ENCODE measurements at regions of chrX and their contacts with region 1.

Region 1: GRCh38 chrX:15674841-15675489 is 10.4 kb upstream of the CLTRN start:
- DNase-seq: peak; percentile 91
- H3K4me3 ChIP-seq: peak overlapping the region; percentile 49 to 54
- H3K27ac ChIP-seq: peak overlapping the region; percentile 94 to 97
- H3K4me1 ChIP-seq: no peaks in the 10 kb centered on the region
- H3K27me3 ChIP-seq: no peaks in the 10 kb centered on the region
- CTCF ChIP-seq: no peak
- POLR2A ChIP-seq: no peak

Region 2: DNA sequence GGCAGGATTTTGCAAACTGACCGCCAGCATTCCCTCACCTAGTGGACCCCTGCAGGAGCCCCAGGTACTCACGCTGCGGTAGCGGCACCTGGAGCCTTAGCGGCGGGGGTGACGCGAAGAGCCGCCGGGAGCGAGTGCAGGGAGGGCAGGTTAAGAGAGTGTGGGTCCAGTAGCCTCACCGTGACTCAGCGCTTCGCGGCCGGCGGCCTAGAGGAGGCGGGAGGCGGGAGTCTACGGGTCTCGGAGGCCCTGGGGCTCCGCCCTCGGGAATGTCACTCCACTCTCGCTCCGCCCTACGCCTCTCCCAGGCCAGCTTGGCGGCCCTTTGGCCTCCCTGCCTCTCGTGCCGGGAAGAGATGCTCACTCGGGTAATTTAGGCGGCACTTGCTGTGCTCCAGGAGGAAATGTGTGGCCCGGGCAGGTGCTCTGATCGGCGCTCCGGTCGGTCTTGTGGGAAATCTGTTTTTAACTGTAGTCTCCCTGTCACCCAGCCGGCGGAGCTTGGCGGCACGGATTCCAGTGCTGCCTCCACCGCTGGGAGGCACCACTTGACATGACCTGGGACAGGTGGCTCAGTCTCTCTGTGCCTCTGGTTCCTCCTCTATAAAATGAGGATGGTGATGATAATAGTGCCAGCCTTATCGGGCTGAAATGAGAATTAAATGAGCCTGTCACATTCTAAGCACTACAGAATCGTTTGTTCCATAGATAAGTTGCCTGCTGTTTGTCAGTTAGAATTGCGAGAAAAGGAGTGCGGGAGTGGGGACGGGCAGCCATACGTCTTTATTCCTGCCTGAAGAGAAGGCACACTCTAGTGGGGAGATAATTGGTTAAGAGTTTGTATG is 181.6 kb before region 1 on chrX and contains the start of gene PIR:
- intact Hi-C with region 1: loop called (anchors 10 kb)
- DNase-seq: peak; percentile 75
- H3K4me3 ChIP-seq: peak within 1 kb of the TSS; percentile 34 to 37
- H3K27ac ChIP-seq: peak within 1 kb of the TSS; percentile 60 to 65
- H3K4me1 ChIP-seq: no peaks in the 10 kb centered on the region
- H3K27me3 ChIP-seq: no peaks in the 10 kb centered on the region
- CTCF ChIP-seq: peak in 3 of 4 experiments; percentile 19 to 46 (median 41)
- POLR2A ChIP-seq: peak; percentile 27
- total RNA-seq, gene PIR: 8.9 to 20.1 TPM

Region 3: DNA sequence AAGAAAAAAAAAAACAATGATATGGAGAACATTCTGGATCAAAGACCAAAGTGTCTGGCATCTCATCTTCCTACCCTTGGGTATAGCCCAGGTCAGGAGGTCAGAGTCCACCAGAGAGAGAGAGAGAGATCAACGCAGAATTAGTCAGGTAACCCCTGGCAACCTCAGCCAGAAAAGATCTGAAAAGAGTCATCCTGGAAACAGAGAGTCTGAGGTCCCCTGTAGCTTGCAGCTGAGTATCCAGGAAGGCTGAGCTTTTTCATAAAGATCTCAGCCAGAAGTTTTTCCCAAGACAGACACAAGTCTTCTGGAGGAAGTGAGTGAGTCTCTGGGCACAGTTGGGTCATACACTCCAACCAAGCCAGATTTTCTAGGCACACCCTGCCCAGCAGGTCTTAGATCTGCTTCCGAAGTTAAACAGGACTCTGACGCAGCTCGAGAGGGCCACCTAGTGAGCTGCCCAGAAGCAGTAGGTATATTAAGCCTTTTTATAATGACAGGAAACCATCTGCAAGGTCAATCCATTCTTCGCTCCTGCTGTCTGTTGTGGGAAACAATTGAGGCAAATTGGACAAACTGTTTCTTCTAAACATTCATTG is 109.9 kb before region 1 on chrX:
- intact Hi-C with region 1: no loop called
- DNase-seq: peak; percentile 67
- H3K4me3 ChIP-seq: no peak overlapping the region
- H3K27ac ChIP-seq: no peak overlapping the region
- H3K4me1 ChIP-seq: no peaks in the 10 kb centered on the region
- H3K27me3 ChIP-seq: no peaks in the 10 kb centered on the region
- CTCF ChIP-seq: peak in 3 of 4 experiments; percentile 40 to 73 (median 66)
- POLR2A ChIP-seq: no peak

Region 4: DNA sequence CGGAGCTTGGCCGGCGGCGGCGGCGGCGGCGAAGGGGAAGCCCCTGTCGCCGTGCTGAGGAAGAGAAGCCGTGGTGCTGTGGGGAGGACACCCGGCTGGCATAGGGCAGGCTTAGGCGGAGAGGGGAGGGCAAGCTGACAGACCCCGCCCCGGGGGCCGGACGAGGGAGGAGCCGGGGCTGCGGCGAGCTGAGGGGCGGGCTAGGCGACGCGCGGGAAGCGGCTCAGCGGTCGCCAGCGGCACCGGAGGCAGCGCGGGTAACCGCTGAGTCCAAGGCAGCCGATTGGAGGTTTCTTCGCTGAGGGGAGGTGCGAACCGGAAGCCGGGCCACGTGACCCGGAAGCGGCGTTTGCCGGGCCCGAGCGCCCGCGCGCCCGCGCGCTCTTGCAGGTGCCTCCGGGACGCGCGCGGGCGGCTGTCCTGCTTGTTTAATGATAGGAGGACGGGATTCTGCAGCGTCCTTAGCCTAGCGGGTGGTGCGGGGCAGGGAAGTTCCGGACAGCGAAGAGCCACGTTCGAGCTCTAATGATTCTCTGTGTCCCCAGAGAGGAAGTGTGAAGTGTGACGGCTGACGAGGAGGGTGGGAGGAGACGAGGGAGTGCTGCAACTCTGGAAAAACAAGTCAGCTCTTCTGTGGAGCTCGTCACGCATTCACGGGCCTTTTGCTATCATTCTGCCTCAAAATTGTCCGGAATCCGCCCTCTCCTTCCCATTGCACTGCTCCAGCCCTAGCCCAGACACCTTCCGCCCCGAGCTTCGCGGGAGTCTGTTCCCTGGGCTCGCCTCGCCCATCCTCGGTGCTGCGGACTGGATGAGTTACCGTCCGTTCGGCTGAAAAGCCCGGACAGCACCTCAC is 180.0 kb after region 1 on chrX and contains the start of gene AP1S2:
- intact Hi-C with region 1: loop called (anchors 10 kb)
- DNase-seq: peak; percentile 87
- H3K4me3 ChIP-seq: peak within 1 kb of the TSS; percentile 54 to 56
- H3K27ac ChIP-seq: peak within 1 kb of the TSS; percentile 71 to 82
- H3K4me1 ChIP-seq: no peaks in the 10 kb centered on the region
- H3K27me3 ChIP-seq: no peaks in the 10 kb centered on the region
- CTCF ChIP-seq: no peak
- POLR2A ChIP-seq: peak; percentile 48
- total RNA-seq, gene AP1S2: 27.3 to 122 TPM

Measured in prostate gland (tissue), 2 donors.